Heart left ventricle (tissue), 16 donors: ENCODE measurements at regions of chr21 and their contacts with region 1.

Region 1: GRCh38 chr21:34526618-34527290 is 14.7 kb upstream of the KCNE1 start:
- DNase-seq: peak in 4 of 5 donors; percentile 85 to 92 (median 87)
- ATAC-seq: peak; percentile 86 to 93 (median 91)
- H3K4me3 ChIP-seq: peak overlapping the region; percentile 17 to 67 (median 53)
- H3K27ac ChIP-seq: peak overlapping the region; percentile 76 to 97 (median 90)
- H3K4me1 ChIP-seq: peaks cover 0 to 70% (median 45%) of the 10 kb centered on the region in 12 donors
- H3K27me3 ChIP-seq: no peaks in the 10 kb centered on the region
- CTCF ChIP-seq: no peak
- POLR2A ChIP-seq: peak in 1 of 2 donors; percentile 86

Region 2: GRCh38 chr21:34545079-34545884 is 18.5 kb after region 1 on chr21:
- intact Hi-C with region 1: loop called in 1 of 10 experiments (anchors 2 kb)
- DNase-seq: peak in 2 of 5 donors; percentile 32 to 54
- ATAC-seq: peak; percentile 70 to 82 (median 76)
- H3K4me3 ChIP-seq: peak overlapping the region in 1 of 12 donors; percentile 19
- H3K27ac ChIP-seq: peak overlapping the region in 11 of 12 donors; percentile 45 to 86 (median 74)
- H3K4me1 ChIP-seq: peaks cover 4 to 53% (median 27%) of the 10 kb centered on the region in 12 donors
- H3K27me3 ChIP-seq: no peaks in the 10 kb centered on the region
- CTCF ChIP-seq: no peak
- POLR2A ChIP-seq: no peak

Region 3: DNA sequence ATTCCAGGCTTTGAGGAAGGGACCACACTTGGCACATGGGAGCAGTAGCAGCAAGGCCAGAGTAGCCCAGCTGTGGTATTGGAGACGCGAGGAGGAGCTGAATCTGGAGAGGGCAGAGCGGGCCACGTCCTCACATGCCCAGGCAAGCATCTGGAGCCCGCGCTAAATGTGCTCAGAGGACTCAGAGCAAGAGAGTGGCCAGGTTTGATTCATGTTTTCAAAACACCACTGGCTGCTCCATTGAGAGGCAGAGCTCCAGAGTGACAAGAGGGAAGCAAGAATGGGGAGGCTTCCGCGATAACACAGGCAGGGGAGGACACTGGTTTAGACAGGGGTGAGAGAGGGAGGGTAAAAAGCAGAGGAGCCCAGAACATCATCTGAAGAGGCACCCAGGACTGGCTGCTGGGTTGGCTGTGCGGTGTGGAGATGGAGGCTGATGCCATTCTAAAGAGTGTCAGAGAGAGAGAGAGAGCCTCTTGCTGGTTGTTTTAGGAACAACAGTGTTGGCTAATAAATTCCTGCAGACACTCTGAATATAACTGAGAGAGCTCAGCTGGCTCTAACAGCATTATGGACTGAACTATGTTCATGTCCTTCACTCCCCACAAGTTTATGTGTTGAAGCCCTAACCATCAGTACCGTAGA is 55.9 kb after region 1 on chr21:
- intact Hi-C with region 1: loop called in 9 of 10 experiments (anchors 2 to 5 kb)
- DNase-seq: peak in 3 of 5 donors; percentile 40 to 59 (median 52)
- ATAC-seq: peak; percentile 70 to 80 (median 76)
- H3K4me3 ChIP-seq: no peak overlapping the region
- H3K27ac ChIP-seq: peak overlapping the region in 11 of 12 donors; percentile 56 to 95 (median 80)
- H3K4me1 ChIP-seq: peaks cover 0 to 72% (median 37%) of the 10 kb centered on the region in 12 donors
- H3K27me3 ChIP-seq: no peaks in the 10 kb centered on the region
- CTCF ChIP-seq: peak; percentile 14 to 51 (median 42)
- POLR2A ChIP-seq: no peak

Region 4: DNA sequence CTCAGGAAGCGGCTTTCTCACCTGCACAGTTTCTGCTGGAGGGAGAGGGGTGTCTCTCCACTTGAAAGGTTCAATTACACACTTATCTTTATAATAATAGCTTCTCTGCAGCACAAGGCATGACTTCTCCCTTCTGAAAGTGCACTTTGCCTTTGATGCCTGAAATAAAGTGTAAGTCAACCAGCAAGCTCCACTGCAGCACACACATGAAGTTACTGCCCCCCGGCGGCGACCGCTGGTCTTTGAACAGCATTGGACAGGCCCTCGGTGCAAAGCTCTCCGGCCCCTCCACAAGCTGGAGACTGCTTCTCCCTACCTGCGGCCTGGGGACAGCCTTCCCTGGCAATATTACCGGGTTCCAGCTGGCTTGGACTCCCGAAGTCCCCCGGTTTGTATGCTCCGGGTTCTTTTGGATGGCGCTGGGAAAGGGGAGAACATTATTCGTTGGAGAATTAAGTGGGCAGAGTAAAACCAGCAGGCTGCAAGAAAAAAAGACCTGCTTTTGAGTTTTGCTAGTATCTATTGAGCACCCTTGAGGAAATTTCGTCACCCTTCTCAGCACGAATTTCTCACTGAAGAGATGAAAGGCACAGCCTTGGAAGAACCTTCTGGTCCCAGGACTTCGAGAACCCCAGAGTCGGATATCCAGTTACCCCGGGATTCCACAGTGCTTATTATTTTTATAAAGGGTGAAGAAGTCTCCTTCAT is 76.4 kb after region 1 on chr21:
- intact Hi-C with region 1: loop called in 3 of 10 experiments (anchors 5 kb)
- DNase-seq: peak; percentile 80 to 90 (median 83)
- ATAC-seq: peak; percentile 94 to 97 (median 96)
- H3K4me3 ChIP-seq: no peak overlapping the region
- H3K27ac ChIP-seq: peak overlapping the region in 2 of 12 donors; percentile 22 to 63
- H3K4me1 ChIP-seq: peaks cover 0 to 25% (median 6%) of the 10 kb centered on the region in 12 donors
- H3K27me3 ChIP-seq: no peaks in the 10 kb centered on the region
- CTCF ChIP-seq: peak; percentile 60 to 85 (median 81)
- POLR2A ChIP-seq: no peak

Region 5: DNA sequence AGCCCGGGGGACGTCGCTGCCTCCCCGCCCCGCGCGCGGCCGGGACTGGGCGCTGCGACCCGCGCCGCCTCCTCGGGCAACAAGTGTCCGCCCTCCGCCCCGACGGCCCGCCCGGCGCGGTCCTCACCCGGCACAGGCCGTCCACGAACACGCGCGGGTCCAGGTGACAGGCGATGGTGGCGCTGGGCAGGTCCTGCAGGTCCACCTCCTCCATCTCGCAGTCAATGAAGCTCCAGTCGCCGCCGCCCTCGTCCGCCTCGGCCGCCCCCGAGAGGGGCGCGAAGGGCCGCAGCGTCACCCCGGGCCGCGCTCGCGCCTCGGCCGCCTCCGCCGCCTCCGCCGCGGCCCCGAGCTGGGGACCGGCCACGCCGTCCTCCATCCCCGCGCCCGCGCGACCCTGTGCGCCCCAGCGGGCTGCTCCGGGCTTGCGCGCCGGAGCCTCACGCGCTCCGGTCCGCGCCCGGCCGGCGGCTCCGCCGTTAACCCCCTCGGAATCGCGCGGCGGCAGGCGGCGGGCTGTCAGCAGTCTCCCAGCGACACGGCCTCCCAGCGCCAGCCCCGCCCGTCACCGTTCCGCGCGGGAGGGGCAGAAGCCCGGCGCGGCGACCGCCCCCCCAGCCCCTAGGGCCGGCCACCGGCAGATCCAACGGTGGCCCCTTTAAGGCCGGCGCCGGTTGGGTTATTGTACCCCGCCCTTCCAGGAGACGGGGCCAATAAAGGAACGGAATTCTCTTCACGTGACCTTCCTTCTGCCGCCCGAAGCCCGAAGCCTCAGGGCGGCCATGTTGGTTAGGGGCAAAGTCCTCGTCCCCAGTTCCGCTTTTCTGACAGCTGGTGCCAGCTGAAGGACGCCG is 88.1 kb after region 1 on chr21 and contains the start of gene RCAN1:
- intact Hi-C with region 1: loop called in 1 of 10 experiments (anchors 5 kb)
- DNase-seq: peak; percentile 92 to 95 (median 92)
- ATAC-seq: peak; percentile 98 to 99 (median 98)
- H3K4me3 ChIP-seq: peak within 1 kb of the TSS; percentile 56 to 99 (median 82)
- H3K27ac ChIP-seq: peak within 1 kb of the TSS; percentile 78 to 95 (median 89)
- H3K4me1 ChIP-seq: peaks cover 3 to 51% (median 28%) of the 10 kb centered on the region in 12 donors
- H3K27me3 ChIP-seq: no peaks in the 10 kb centered on the region
- CTCF ChIP-seq: no peak
- POLR2A ChIP-seq: peak in 1 of 2 donors; percentile 52
- total RNA-seq, gene RCAN1: 33.7 to 102 (median 57.6) TPM

Region 6: GRCh38 chr21:34693192-34693810 is 166.5 kb after region 1 on chr21:
- intact Hi-C with region 1: no loop called
- DNase-seq: peak in 1 of 5 donors; percentile 45
- ATAC-seq: peak in 1 of 4 donors; percentile 25
- H3K4me3 ChIP-seq: no peak overlapping the region
- H3K27ac ChIP-seq: no peak overlapping the region
- H3K4me1 ChIP-seq: peaks cover 0 to 15% (median 0%) of the 10 kb centered on the region in 12 donors
- H3K27me3 ChIP-seq: no peaks in the 10 kb centered on the region
- CTCF ChIP-seq: peak; percentile 58 to 86 (median 78)
- POLR2A ChIP-seq: no peak